ENCODE measurements at regions of chr11 and their contacts with region 1.

Region 1: DNA sequence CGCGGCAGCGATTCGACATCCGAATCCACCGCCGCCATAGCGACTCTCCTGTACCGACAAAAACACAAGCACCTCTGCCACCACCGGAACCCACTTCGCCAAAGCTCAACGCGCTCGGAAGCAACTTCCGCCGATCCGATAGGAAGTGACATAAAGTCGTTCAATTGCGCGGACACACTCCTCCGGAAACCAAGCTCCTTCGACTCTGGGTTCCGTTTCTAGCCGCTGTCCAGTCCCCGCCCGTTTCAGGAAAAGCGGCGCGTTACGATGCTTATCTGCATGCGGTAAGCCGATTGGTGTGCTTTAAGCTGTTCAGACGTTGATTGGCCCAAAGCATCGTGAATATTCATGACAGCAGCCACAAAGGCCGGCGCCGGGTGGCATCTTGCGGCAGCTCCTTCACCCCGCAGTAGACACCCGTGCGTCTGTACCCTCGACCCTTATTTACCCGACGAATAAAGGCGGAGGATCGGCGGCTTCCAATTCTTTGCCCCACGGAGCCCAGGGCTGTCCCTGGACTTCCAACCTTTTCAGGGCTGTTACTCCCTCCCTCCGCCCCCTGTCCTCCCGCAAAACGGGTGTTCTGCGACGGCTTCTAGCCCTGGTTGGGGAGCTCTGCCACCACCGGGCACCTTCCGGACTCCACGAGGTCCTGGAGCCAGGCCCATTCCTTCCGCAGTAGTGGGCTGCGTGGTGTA is at the start of gene TUT1:
- DNase-seq: peak; percentile 91 to 97
- ATAC-seq: peak; percentile 95 to 98 (median 96)
- H3K4me3 ChIP-seq: peak within 1 kb of the TSS; percentile 63 to 86 (median 78)
- H3K27ac ChIP-seq: peak within 1 kb of the TSS; percentile 83 to 97 (median 94)
- H3K4me1 ChIP-seq: peaks cover 3 to 42% (median 28%) of the 10 kb centered on the region in 9 donors
- H3K27me3 ChIP-seq: no peaks in the 10 kb centered on the region
- CTCF ChIP-seq: peak in 5 of 9 donors; percentile 5 to 39 (median 24)
- total RNA-seq, gene TUT1: 8.2 to 17.9 (median 12.3) TPM

Region 2: DNA sequence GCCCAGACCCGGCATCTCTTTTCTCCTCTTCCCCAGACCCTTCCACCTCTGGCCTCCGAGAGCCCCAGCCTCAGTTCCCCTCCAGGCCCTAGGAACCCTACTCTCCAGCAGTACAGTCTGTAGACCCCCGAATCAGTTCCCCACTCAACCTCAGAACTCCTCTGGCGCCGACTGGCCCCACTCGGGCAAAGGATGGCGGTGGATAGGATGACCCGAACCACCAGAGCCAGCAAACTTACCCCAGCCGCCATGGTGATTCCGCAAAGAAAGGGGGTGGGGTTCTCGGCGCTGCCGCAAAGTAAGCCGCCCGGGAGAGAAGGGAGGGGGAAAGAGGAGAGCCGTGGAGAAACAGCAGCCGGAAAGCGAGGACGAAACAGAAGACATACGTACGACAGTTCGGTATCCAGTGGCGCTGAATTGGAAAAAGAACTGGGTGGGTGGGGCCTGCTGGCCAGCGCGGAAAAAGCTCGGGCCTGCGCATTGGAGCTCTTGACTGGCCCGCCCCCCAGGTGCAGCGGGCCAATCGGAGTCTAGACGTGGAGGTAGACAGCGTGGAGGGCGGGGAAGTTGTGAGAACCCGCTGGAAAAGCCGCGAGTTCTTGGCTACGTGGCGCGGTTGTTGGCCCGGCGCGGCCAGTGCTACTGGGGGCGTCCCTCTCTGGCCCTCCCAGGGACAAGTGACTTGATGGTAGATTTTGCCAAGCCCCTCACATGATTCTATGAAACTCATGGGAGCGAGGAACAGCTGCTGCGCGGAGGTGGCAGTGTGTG is 17.8 kb before region 1 on chr11 and contains the start of gene EEF1G:
- intact Hi-C with region 1: loop called in 1 of 10 experiments (anchors 2 kb)
- DNase-seq: peak; percentile 97 to 100
- ATAC-seq: peak; percentile 95 to 97 (median 96)
- H3K4me3 ChIP-seq: peak within 1 kb of the TSS; percentile 71 to 95 (median 85)
- H3K27ac ChIP-seq: peak within 1 kb of the TSS; percentile 81 to 98 (median 92)
- H3K4me1 ChIP-seq: peaks cover 11 to 79% (median 54%) of the 10 kb centered on the region in 9 donors
- H3K27me3 ChIP-seq: no peaks in the 10 kb centered on the region
- CTCF ChIP-seq: no peak
- total RNA-seq, gene EEF1G: 784 to 1,131 (median 1,002) TPM

Region 3: DNA sequence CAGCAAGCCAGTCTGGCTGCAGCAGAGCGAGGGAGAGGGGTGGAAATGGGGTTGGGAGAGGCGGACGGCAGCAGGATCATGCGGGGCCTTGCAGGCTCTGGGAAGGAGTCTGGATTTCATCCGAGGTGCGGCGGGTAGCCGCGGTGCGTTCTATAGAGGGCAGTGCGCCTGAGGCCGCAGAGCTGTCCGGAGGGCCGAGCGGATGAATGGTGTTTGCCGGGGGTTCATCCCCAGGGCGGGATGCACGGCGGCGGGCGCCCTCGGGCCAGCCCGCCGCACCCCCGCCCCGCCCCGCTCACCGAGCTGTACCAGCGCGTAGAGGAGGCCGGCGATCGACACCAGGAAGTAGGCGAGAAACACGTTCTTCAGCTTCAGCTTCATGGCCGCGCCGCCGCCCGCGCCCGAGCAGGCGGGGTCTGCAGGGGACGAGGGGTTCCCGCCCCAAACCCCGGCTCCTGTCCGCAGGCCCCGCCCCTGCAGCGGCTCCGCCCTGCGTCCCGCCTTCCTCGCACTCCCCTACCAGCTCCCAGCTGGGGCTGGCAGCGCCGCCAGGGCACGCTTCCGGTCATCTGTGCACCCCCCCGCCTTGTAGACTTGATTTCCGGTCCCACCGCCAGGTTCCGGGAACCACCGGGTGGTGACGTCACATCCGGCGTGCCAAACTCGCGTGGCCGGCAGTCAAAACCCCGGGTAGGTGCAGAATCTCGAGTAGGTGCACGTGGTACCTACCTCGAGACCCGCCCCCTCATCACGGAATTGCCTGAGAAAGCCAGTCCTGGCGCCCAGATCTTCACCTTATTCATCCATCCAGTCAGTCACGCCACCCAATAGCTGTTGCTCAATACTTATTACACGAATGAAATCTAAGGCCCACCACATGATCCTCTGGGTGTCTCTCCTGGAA is 30.2 kb after region 1 on chr11 and contains the start of gene B3GAT3:
- intact Hi-C with region 1: loop called in 1 of 10 experiments (anchors 1 kb)
- DNase-seq: peak; percentile 96 to 98
- ATAC-seq: peak; percentile 97 to 99 (median 98)
- H3K4me3 ChIP-seq: peak within 1 kb of the TSS; percentile 50 to 92 (median 74)
- H3K27ac ChIP-seq: peak within 1 kb of the TSS; percentile 44 to 95 (median 89)
- H3K4me1 ChIP-seq: peaks cover 4 to 27% (median 21%) of the 10 kb centered on the region in 9 donors
- H3K27me3 ChIP-seq: no peaks in the 10 kb centered on the region
- CTCF ChIP-seq: peak in 3 of 9 donors; percentile 9 to 11 (median 9)
- total RNA-seq, gene B3GAT3: 6.8 to 20.7 (median 10.6) TPM

Region 4: GRCh38 chr11:62656796-62657429 is 65.3 kb after region 1 on chr11:
- intact Hi-C with region 1: no loop called
- DNase-seq: no peak
- ATAC-seq: no peak
- H3K4me3 ChIP-seq: no peak overlapping the region
- H3K27ac ChIP-seq: no peak overlapping the region
- H3K4me1 ChIP-seq: peaks cover 0 to 12% (median 8%) of the 10 kb centered on the region in 9 donors
- H3K27me3 ChIP-seq: no peaks in the 10 kb centered on the region
- CTCF ChIP-seq: no peak

Region 5: DNA sequence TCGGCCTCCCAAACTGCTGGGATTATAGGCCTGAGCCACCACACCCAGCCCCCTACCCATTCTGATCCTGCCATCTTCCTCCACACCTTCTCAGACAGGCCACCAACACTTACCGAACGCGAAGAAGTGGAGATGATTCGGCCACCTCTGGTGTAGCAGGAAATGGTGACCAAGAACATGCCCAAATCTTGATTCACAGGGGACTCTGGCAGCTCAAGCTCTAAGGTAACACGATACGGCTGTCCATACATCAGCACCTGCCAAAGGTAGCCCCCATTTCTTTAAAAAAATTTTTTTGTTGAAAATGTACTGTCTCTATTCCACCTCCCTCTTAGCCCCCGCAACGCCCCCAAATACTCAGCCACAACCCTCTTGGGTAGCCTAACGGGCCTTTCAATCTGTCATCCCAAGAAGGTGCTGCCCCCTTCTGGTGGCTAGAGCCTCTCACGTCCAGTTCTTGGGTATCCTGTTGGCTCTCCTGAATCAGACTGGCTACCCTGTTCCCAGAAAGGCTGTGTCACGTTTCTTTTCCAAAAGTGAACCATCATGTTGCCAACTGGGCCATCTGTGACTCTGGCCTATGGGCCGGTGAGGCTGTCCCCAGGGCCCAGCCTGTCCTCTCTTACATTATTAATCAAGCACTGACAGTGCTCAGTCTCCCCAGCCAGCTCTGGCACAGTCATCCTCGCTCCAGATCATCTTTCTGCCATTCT is 103.0 kb after region 1 on chr11:
- intact Hi-C with region 1: loop called in 1 of 10 experiments (anchors 10 kb)
- DNase-seq: peak; percentile 71 to 84
- ATAC-seq: peak; percentile 71 to 85 (median 78)
- H3K4me3 ChIP-seq: no peak overlapping the region
- H3K27ac ChIP-seq: peak overlapping the region in 4 of 10 donors; percentile 15 to 44 (median 19)
- H3K4me1 ChIP-seq: peaks cover 0 to 22% (median 16%) of the 10 kb centered on the region in 9 donors
- H3K27me3 ChIP-seq: no peaks in the 10 kb centered on the region
- CTCF ChIP-seq: peak; percentile 60 to 92 (median 87)

Region 6: GRCh38 chr11:62855571-62856332 is 264.2 kb after region 1 on chr11:
- intact Hi-C with region 1: loop called in 1 of 10 experiments (anchors 5 kb)
- DNase-seq: peak; percentile 96
- ATAC-seq: peak; percentile 97 to 99 (median 99)
- H3K4me3 ChIP-seq: peak overlapping the region; percentile 51 to 98 (median 68)
- H3K27ac ChIP-seq: peak overlapping the region; percentile 1 to 88 (median 77)
- H3K4me1 ChIP-seq: peaks cover 12 to 49% (median 29%) of the 10 kb centered on the region in 9 donors
- H3K27me3 ChIP-seq: no peaks in the 10 kb centered on the region
- CTCF ChIP-seq: no peak

Measured in heart right ventricle (tissue), 16 donors.